ENCODE measurements at regions of chr4 and their contacts with region 1.

Region 1: GRCh38 chr4:118684873-118685811 is at the start of gene METTL14:
- DNase-seq: peak; percentile 71 to 92 (median 85)
- ATAC-seq: peak; percentile 91
- H3K4me3 ChIP-seq: peak within 1 kb of the TSS; percentile 86 to 88
- H3K4me3 Mint-ChIP-seq: peak within 1 kb of the TSS; percentile 92
- H3K27ac ChIP-seq: peak within 1 kb of the TSS; percentile 84 to 94
- H3K27ac Mint-ChIP-seq: peak within 1 kb of the TSS; percentile 98
- H3K4me1 ChIP-seq: peaks cover 15% of the 10 kb centered on the region
- H3K4me1 Mint-ChIP-seq: peaks cover 35% of the 10 kb centered on the region
- H3K27me3 ChIP-seq: no peaks in the 10 kb centered on the region
- H3K27me3 Mint-ChIP-seq: no peaks in the 10 kb centered on the region
- CTCF ChIP-seq: no peak
- total RNA-seq, gene METTL14: 68.8 to 70.2 TPM

Region 2: GRCh38 chr4:118850488-118851173 is 165.5 kb after region 1 on chr4:
- CTCF ChIA-PET with region 1: no interaction called
- POLR2A ChIA-PET with region 1: no interaction called
- intact Hi-C with region 1: loop called in 1 of 2 experiments (anchors 5 kb)
- DNase-seq: peak in 6 of 9 experiments; percentile 36 to 78 (median 48)
- ATAC-seq: peak; percentile 95
- H3K4me3 ChIP-seq: peak overlapping the region; percentile 55 to 63
- H3K4me3 Mint-ChIP-seq: peak overlapping the region; percentile 92
- H3K27ac ChIP-seq: peak overlapping the region; percentile 48 to 80
- H3K27ac Mint-ChIP-seq: peak overlapping the region; percentile 96
- H3K4me1 ChIP-seq: peaks cover 7% of the 10 kb centered on the region
- H3K4me1 Mint-ChIP-seq: peaks cover 35% of the 10 kb centered on the region
- H3K27me3 ChIP-seq: no peaks in the 10 kb centered on the region
- H3K27me3 Mint-ChIP-seq: peaks cover 10% of the 10 kb centered on the region
- CTCF ChIP-seq: no peak